Tibial artery (tissue), 4 donors: ENCODE measurements at regions of chr1 and their contacts with region 1.

Region 1: DNA sequence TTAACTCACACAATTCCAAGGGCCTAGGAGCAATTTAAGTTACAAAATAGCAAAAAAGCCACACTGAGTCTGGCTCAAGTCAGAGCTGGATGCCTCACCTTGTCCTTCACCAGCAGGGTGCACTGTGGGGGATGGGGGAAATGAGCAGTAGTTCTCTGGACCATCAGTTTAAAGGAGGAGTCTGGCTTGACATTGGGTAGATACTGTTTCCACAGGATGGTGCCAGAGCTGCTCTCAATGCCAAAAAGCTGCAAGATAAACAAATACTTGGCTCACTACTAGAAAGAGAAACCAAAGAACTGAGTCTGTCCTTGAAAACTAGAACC is 18.8 kb downstream of the EMC1 start:
- DNase-seq: peak in 1 of 2 donors; percentile 64
- H3K4me3 ChIP-seq: no peak overlapping the region
- H3K27ac ChIP-seq: no peak overlapping the region
- H3K4me1 ChIP-seq: no peaks in the 10 kb centered on the region
- H3K27me3 ChIP-seq: no peaks in the 10 kb centered on the region
- CTCF ChIP-seq: no peak

Region 2: DNA sequence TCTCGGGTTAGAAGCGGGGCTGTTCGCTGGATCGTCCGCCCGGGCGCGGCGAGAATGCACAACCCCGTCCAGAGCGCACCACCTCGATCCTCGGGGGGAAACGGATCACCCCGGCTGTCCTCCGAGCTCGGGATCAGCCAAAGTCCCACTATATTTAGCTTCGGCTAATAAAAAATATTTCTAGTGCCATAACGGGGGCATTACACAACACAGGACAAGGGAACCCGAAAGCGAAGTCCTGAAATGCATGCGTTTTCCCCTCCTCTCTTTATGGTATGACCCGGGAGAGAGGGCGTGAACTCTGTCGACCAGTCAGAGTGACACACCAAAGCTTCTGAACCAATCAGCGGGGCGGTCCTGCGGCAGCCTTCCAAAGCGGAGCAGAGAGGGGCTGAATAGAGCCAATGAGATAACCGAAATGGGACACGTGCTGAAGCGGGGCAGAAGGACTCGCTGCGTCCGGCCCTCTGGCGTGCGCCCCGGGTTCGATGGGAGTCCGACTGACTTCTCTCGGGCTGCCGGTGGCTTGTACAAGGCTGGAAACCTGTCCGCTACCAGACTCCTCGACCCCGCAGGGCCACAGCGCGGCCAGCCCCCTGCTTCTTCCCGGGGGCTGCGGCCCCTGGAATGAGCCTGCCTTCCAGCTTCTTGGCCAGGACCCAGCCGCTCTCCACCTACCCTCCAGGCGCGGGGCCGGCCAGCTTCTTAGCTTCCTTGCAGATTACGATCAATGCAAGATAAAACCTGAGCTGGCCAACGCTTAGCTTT is 329.8 kb before region 1 on chr1 and contains the start of gene ALDH4A1:
- intact Hi-C with region 1: loop called (anchors 10 kb)
- DNase-seq: peak; percentile 99
- H3K4me3 ChIP-seq: peak within 1 kb of the TSS; percentile 68 to 87
- H3K27ac ChIP-seq: peak within 1 kb of the TSS; percentile 88 to 90
- H3K4me1 ChIP-seq: peaks cover 7 to 35% (median 27%) of the 10 kb centered on the region in 4 donors
- H3K27me3 ChIP-seq: no peaks in the 10 kb centered on the region
- CTCF ChIP-seq: peak in 1 of 2 experiments; percentile 8

Region 3: GRCh38 chr1:18978706-18979105 is 253.8 kb before region 1 on chr1:
- intact Hi-C with region 1: no loop called
- DNase-seq: no peak
- H3K4me3 ChIP-seq: no peak overlapping the region
- H3K27ac ChIP-seq: no peak overlapping the region
- H3K4me1 ChIP-seq: no peaks in the 10 kb centered on the region
- H3K27me3 ChIP-seq: peaks cover 0 to under 1% of the 10 kb centered on the region in 2 donors
- CTCF ChIP-seq: no peak

Region 4: GRCh38 chr1:19179597-19180264 is 52.8 kb before region 1 on chr1:
- intact Hi-C with region 1: loop called (anchors 10 kb)
- DNase-seq: no peak
- H3K4me3 ChIP-seq: no peak overlapping the region
- H3K27ac ChIP-seq: no peak overlapping the region
- H3K4me1 ChIP-seq: no peaks in the 10 kb centered on the region
- H3K27me3 ChIP-seq: no peaks in the 10 kb centered on the region
- CTCF ChIP-seq: no peak